B cell (primary cell): ENCODE measurements at regions of chr11 and their contacts with region 1.

Region 1: DNA sequence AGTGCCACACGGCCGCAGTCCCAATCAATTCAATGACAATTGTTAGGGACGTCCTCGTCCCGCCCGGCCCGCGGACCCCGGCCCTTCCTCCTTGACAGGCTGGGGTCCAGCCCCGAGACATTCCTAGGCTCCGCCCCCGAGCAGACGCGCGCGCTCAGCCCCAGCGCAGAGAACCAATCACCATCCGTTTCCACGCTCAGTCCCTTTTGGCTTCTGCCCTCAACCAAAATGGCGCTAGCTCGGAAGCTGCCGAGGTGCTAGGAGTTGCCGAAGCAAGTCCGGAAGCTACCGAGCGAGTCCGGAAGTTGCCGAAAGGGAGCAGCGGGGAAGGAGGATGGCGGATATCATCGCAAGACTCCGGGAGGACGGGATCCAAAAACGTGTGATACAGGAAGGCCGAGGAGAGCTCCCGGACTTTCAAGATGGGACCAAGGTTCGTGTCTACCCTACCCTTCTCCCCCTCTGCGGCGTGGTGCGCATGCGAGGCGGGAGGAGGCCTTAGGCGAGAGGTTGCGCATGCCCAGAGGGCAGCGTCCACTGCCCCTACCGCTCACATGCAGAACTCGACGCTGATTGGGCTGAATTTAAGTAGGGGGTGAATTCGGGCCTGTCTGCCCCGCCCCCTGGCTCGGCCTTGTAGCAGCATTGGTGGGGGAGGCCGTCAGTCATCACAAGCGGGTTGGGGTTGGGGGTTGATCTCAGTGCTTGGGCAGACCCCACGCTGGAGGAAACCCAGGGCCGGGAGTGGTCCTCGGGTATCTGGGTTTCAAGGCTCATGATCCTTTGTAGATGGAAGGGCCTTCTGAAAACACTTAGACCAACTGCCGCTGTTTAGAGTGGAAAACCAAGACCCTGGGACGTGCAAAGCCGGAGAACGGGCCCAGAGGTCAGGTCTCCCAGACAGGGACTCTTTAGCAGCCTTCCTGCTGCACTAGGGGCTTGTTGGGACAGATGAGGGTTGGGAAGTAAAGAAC is at the start of gene AIP:
- DNase-seq: peak; percentile 98
- ATAC-seq: peak; percentile 87
- H3K4me3 ChIP-seq: peak within 1 kb of the TSS; percentile 56 to 99 (median 68)
- H3K4me3 Mint-ChIP-seq: peak within 1 kb of the TSS; percentile 99
- H3K27ac ChIP-seq: peak within 1 kb of the TSS; percentile 75 to 79
- H3K27ac Mint-ChIP-seq: peak within 1 kb of the TSS; percentile 100
- H3K4me1 ChIP-seq: peaks cover 38 to 56% of the 10 kb centered on the region in 2 donors
- H3K4me1 Mint-ChIP-seq: peaks cover 56% of the 10 kb centered on the region
- H3K27me3 ChIP-seq: no peaks in the 10 kb centered on the region
- H3K27me3 Mint-ChIP-seq: no peaks in the 10 kb centered on the region
- CTCF ChIP-seq: no peak
- total RNA-seq, gene AIP: 120 and 127 TPM in 2 replicates

Region 2: GRCh38 chr11:67239783-67240575 is 243.1 kb before region 1 on chr11:
- CTCF ChIA-PET with region 1: no interaction called
- POLR2A ChIA-PET with region 1: no interaction called
- intact Hi-C with region 1: no loop called
- DNase-seq: peak; percentile 96
- ATAC-seq: peak; percentile 94
- H3K4me3 ChIP-seq: peak overlapping the region; percentile 71 to 99 (median 82)
- H3K4me3 Mint-ChIP-seq: peak overlapping the region; percentile 96
- H3K27ac ChIP-seq: peak overlapping the region; percentile 86 to 91
- H3K27ac Mint-ChIP-seq: peak overlapping the region; percentile 99
- H3K4me1 ChIP-seq: peaks cover 26 to 34% of the 10 kb centered on the region in 2 donors
- H3K4me1 Mint-ChIP-seq: peaks cover 43% of the 10 kb centered on the region
- H3K27me3 ChIP-seq: no peaks in the 10 kb centered on the region
- H3K27me3 Mint-ChIP-seq: no peaks in the 10 kb centered on the region
- CTCF ChIP-seq: no peak

Region 3: GRCh38 chr11:67277231-67277961 is 205.7 kb before region 1 on chr11:
- CTCF ChIA-PET with region 1: no interaction called
- POLR2A ChIA-PET with region 1: no interaction called
- intact Hi-C with region 1: loop called (anchors 2 kb)
- DNase-seq: peak; percentile 96
- ATAC-seq: peak; percentile 95
- H3K4me3 ChIP-seq: peak overlapping the region; percentile 35 to 59 (median 50)
- H3K4me3 Mint-ChIP-seq: peak overlapping the region; percentile 84
- H3K27ac ChIP-seq: peak overlapping the region; percentile 82
- H3K27ac Mint-ChIP-seq: peak overlapping the region; percentile 95
- H3K4me1 ChIP-seq: peaks cover 82 to 86% of the 10 kb centered on the region in 2 donors
- H3K4me1 Mint-ChIP-seq: peaks cover 76% of the 10 kb centered on the region
- H3K27me3 ChIP-seq: no peaks in the 10 kb centered on the region
- H3K27me3 Mint-ChIP-seq: no peaks in the 10 kb centered on the region
- CTCF ChIP-seq: no peak

Region 4: GRCh38 chr11:67428052-67428914 is 54.8 kb before region 1 on chr11 and contains the start of gene RPS6KB2:
- CTCF ChIA-PET with region 1: interaction called, 5 read pairs
- POLR2A ChIA-PET with region 1: interaction called, 53 read pairs
- intact Hi-C with region 1: loop called (anchors 1 kb)
- DNase-seq: peak; percentile 98
- ATAC-seq: peak; percentile 86
- H3K4me3 ChIP-seq: peak within 1 kb of the TSS; percentile 82 to 95 (median 91)
- H3K4me3 Mint-ChIP-seq: peak within 1 kb of the TSS; percentile 99
- H3K27ac ChIP-seq: peak within 1 kb of the TSS; percentile 70 to 92
- H3K27ac Mint-ChIP-seq: peak within 1 kb of the TSS; percentile 96
- H3K4me1 ChIP-seq: peaks cover 13 to 46% of the 10 kb centered on the region in 2 donors
- H3K4me1 Mint-ChIP-seq: peaks cover 41% of the 10 kb centered on the region
- H3K27me3 ChIP-seq: no peaks in the 10 kb centered on the region
- H3K27me3 Mint-ChIP-seq: no peaks in the 10 kb centered on the region
- CTCF ChIP-seq: no peak
- total RNA-seq, gene RPS6KB2: 81.8 and 82.0 TPM in 2 replicates

Region 5: GRCh38 chr11:67572747-67573419 is 89.8 kb after region 1 on chr11:
- CTCF ChIA-PET with region 1: no interaction called
- POLR2A ChIA-PET with region 1: no interaction called
- intact Hi-C with region 1: no loop called
- DNase-seq: peak; percentile 69
- ATAC-seq: no peak
- H3K4me3 ChIP-seq: no peak overlapping the region
- H3K4me3 Mint-ChIP-seq: no peak overlapping the region
- H3K27ac ChIP-seq: no peak overlapping the region
- H3K27ac Mint-ChIP-seq: no peak overlapping the region
- H3K4me1 ChIP-seq: no peaks in the 10 kb centered on the region
- H3K4me1 Mint-ChIP-seq: peaks cover 3% of the 10 kb centered on the region
- H3K27me3 ChIP-seq: peaks cover 0 to 33% (median 9%) of the 10 kb centered on the region in 4 experiments
- H3K27me3 Mint-ChIP-seq: peaks cover 28% of the 10 kb centered on the region
- CTCF ChIP-seq: peak; percentile 80

Region 6: DNA sequence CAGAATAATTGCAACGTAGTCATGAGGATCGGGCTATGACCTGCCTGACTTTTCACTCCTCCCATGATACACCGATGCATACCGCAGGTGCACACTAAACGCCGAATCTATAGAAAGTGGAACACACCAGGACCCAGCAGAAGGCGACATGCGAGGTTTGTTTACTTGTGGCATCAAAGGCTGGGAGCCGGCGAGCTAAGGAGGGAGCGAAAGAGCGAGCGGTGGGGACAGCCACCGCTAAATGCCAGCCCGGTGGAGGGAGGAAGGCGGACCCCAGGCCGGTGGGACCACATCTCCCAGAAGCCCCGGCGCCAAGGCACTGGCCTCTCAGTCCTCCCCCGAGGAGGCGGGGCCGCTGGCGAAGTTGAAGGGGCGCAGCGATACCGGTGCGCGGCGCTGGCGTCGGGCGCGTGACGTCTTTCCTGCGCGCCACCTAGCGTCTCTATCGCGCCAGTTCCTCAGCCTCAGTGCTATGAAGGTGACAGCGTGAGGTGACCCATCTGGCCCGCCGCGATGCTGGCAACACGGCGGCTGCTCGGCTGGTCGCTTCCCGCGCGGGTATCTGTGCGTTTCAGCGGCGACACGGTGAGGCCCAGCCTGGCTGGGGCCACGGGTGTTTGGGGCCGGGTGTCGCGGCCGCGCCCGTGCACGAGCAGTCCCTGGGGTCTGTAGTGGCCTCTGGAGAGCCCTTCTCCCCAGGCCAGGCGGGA is 123.5 kb after region 1 on chr11 and contains the start of gene NDUFV1:
- CTCF ChIA-PET with region 1: no interaction called
- POLR2A ChIA-PET with region 1: interaction called, 10 read pairs
- intact Hi-C with region 1: no loop called
- DNase-seq: peak; percentile 97
- ATAC-seq: peak; percentile 99
- H3K4me3 ChIP-seq: peak within 1 kb of the TSS; percentile 70 to 90 (median 88)
- H3K4me3 Mint-ChIP-seq: peak within 1 kb of the TSS; percentile 95
- H3K27ac ChIP-seq: peak within 1 kb of the TSS; percentile 43 to 72
- H3K27ac Mint-ChIP-seq: peak within 1 kb of the TSS; percentile 90
- H3K4me1 ChIP-seq: peaks cover 13 to 17% of the 10 kb centered on the region in 2 donors
- H3K4me1 Mint-ChIP-seq: peaks cover 20% of the 10 kb centered on the region
- H3K27me3 ChIP-seq: peaks cover 0 to 16% (median 5%) of the 10 kb centered on the region in 4 experiments
- H3K27me3 Mint-ChIP-seq: peaks cover 18% of the 10 kb centered on the region
- CTCF ChIP-seq: peak; percentile 82
- total RNA-seq, gene NDUFV1: 232 and 238 TPM in 2 replicates